Mammary epithelial cell (primary cell): ENCODE measurements at regions of chrX and their contacts with region 1.

Region 1: DNA sequence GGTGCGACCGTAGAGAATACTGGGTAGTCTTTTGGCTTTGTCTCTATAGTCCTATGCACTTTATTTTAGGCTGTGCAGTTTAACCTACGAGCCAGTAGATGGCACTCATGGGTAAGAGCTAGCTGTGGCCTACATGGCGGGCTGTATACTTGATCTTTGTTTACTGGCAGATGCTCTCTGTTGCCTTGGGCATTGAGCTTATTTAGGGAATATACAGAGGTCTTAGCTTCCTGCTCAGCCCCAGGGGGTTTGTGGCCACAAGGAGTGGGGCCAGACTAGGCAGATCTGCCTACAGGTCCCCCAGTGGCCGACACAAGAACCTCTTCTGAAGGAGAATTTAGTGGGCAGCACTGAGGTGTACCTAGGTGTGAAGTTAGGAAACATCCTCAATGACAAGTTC is 227.6 kb upstream of the HDX start:
- DNase-seq: peak; percentile 25
- H3K4me3 ChIP-seq: no peak overlapping the region
- H3K27ac ChIP-seq: no peak overlapping the region
- H3K4me1 ChIP-seq: peaks cover 3% of the 10 kb centered on the region
- H3K27me3 ChIP-seq: no peaks in the 10 kb centered on the region
- CTCF ChIP-seq: peak; percentile 93 to 97

Region 2: GRCh38 chrX:84666086-84666485 is 63.7 kb before region 1 on chrX:
- CTCF ChIA-PET with region 1: no interaction called
- dilution Hi-C with region 1: no loop called
- in situ Hi-C with region 1: no loop called
- intact Hi-C with region 1: no loop called
- DNase-seq: no peak
- H3K4me3 ChIP-seq: no peak overlapping the region
- H3K27ac ChIP-seq: no peak overlapping the region
- H3K4me1 ChIP-seq: no peaks in the 10 kb centered on the region
- H3K27me3 ChIP-seq: no peaks in the 10 kb centered on the region
- CTCF ChIP-seq: no peak

Region 3: GRCh38 chrX:84907324-84907968 is 177.6 kb after region 1 on chrX:
- CTCF ChIA-PET with region 1: interaction called, 5 read pairs
- dilution Hi-C with region 1: no loop called
- in situ Hi-C with region 1: loop called in 1 of 2 experiments (anchors 25 kb)
- intact Hi-C with region 1: loop called (anchors 1 kb)
- DNase-seq: peak; percentile 9
- H3K4me3 ChIP-seq: no peak overlapping the region
- H3K27ac ChIP-seq: no peak overlapping the region
- H3K4me1 ChIP-seq: no peaks in the 10 kb centered on the region
- H3K27me3 ChIP-seq: no peaks in the 10 kb centered on the region
- CTCF ChIP-seq: peak; percentile 16 to 41

Region 4: GRCh38 chrX:85031505-85031904 is 301.7 kb after region 1 on chrX:
- CTCF ChIA-PET with region 1: no interaction called
- dilution Hi-C with region 1: no loop called
- in situ Hi-C with region 1: loop called in 1 of 2 experiments (anchors 25 kb)
- intact Hi-C with region 1: no loop called
- DNase-seq: no peak
- H3K4me3 ChIP-seq: no peak overlapping the region
- H3K27ac ChIP-seq: no peak overlapping the region
- H3K4me1 ChIP-seq: no peaks in the 10 kb centered on the region
- H3K27me3 ChIP-seq: no peaks in the 10 kb centered on the region
- CTCF ChIP-seq: no peak

Region 5: GRCh38 chrX:85052636-85053343 is 323.0 kb after region 1 on chrX:
- CTCF ChIA-PET with region 1: interaction called, 8 read pairs
- dilution Hi-C with region 1: no loop called
- in situ Hi-C with region 1: loop called (anchors 25 kb)
- intact Hi-C with region 1: loop called (anchors 1 kb)
- DNase-seq: peak; percentile 68
- H3K4me3 ChIP-seq: no peak overlapping the region
- H3K27ac ChIP-seq: peak overlapping the region; percentile 43
- H3K4me1 ChIP-seq: peaks cover 3% of the 10 kb centered on the region
- H3K27me3 ChIP-seq: no peaks in the 10 kb centered on the region
- CTCF ChIP-seq: peak; percentile 34 to 57

Region 6: GRCh38 chrX:85084770-85085393 is 355.1 kb after region 1 on chrX:
- CTCF ChIA-PET with region 1: interaction called, 12 read pairs
- dilution Hi-C with region 1: no loop called
- in situ Hi-C with region 1: no loop called
- intact Hi-C with region 1: no loop called
- DNase-seq: peak; percentile 14
- H3K4me3 ChIP-seq: no peak overlapping the region
- H3K27ac ChIP-seq: no peak overlapping the region
- H3K4me1 ChIP-seq: no peaks in the 10 kb centered on the region
- H3K27me3 ChIP-seq: no peaks in the 10 kb centered on the region
- CTCF ChIP-seq: peak; percentile 77 to 78